ENCODE measurements at regions of chr21 and their contacts with region 1.

Region 1: DNA sequence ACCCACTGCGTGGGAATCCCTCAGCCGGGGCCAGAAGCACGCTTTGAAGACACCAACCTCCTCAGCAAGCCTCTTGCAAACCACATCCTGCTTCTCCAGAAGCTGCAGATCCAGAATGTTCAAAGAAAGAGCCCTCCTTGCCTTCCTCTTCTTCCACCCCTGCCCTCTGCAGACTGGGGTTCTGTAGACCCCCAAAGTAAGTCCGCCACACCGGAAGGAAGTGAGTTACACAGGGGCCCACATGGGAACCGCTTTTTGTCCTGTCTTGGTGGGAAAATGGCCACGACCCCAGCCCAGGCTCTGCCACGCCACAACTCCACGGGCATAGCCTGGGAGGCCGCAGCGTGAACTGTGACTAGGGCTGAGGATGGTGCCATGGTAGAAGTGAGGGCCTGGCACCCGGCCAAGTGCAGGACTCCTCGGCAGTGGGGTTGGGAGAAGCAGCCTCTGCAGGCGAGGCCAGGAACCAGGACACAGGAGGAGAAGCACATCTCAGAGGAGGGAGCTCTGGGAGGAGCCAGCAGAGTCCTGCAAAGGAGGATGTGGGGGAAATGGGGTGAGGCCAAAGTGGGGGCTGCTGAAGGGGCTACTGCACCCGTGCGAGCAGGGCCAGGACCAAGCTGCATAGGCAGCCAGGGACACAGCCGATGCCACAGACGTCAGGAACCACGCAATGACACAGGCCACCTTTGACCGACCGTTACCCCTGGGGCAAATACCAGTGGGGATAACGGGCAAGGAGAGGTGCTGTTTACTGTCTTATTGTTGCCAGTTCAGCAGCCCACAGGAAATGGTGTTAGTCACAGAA is 30.9 kb downstream of the PDE9A start:
- DNase-seq: peak; percentile 90
- H3K4me3 Mint-ChIP-seq: peak overlapping the region; percentile 81
- H3K27ac Mint-ChIP-seq: peak overlapping the region; percentile 97
- H3K4me1 Mint-ChIP-seq: peaks cover 49% of the 10 kb centered on the region
- H3K27me3 Mint-ChIP-seq: no peaks in the 10 kb centered on the region

Region 2: GRCh38 chr21:42614811-42615659 is 69.3 kb before region 1 on chr21:
- intact Hi-C with region 1: loop called (anchors 2 kb)
- DNase-seq: peak; percentile 87
- H3K4me3 Mint-ChIP-seq: no peak overlapping the region
- H3K27ac Mint-ChIP-seq: no peak overlapping the region
- H3K4me1 Mint-ChIP-seq: peaks cover 7% of the 10 kb centered on the region
- H3K27me3 Mint-ChIP-seq: peaks cover 14% of the 10 kb centered on the region

Region 3: GRCh38 chr21:42746593-42747275 is 62.4 kb after region 1 on chr21:
- intact Hi-C with region 1: loop called (anchors 5 kb)
- DNase-seq: peak; percentile 82
- H3K4me3 Mint-ChIP-seq: peak overlapping the region; percentile 72
- H3K27ac Mint-ChIP-seq: peak overlapping the region; percentile 91
- H3K4me1 Mint-ChIP-seq: peaks cover 13% of the 10 kb centered on the region
- H3K27me3 Mint-ChIP-seq: no peaks in the 10 kb centered on the region

Region 4: GRCh38 chr21:42781150-42781970 is 97.0 kb after region 1 on chr21:
- intact Hi-C with region 1: loop called (anchors 5 kb)
- DNase-seq: no peak
- H3K4me3 Mint-ChIP-seq: peak overlapping the region; percentile 29
- H3K27ac Mint-ChIP-seq: no peak overlapping the region
- H3K4me1 Mint-ChIP-seq: peaks cover 31% of the 10 kb centered on the region
- H3K27me3 Mint-ChIP-seq: peaks cover 30% of the 10 kb centered on the region

Region 5: GRCh38 chr21:42833439-42833815 is 149.1 kb after region 1 on chr21:
- intact Hi-C with region 1: loop called (anchors 1 kb)
- DNase-seq: peak; percentile 87
- H3K4me3 Mint-ChIP-seq: peak overlapping the region; percentile 69
- H3K27ac Mint-ChIP-seq: peak overlapping the region; percentile 51
- H3K4me1 Mint-ChIP-seq: peaks cover 25% of the 10 kb centered on the region
- H3K27me3 Mint-ChIP-seq: peaks cover 11% of the 10 kb centered on the region